ENCODE measurements at regions of chr17 and their contacts with region 1.

Region 1: GRCh38 chr17:40857535-40857934 is 9.5 kb downstream of the KRT12 start:
- DNase-seq: no peak
- ATAC-seq: peak; percentile 67

Region 2: GRCh38 chr17:40615295-40615988 is 242.1 kb before region 1 on chr17:
- intact Hi-C with region 1: no loop called
- DNase-seq: no peak
- ATAC-seq: peak; percentile 65

Region 3: DNA sequence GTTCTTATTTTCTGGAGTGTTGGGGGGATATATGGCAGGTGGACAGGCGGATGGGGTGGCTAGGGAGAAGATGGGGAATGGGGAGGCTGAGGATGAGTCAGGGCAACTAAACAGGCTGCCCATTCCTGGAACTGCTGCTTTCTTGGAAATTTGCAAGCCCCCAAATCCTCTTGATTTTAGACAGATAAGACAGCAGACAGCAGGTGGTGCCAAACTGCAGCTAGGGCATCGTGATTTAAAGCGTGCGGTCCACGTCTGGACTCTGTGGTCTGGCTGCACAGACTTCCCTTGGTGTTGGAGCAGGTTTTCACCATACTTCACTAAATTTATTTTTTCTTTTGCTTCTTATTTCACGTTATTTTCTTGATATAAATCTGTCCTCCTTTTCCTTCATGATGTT is 143.1 kb before region 1 on chr17:
- intact Hi-C with region 1: no loop called
- DNase-seq: no peak
- ATAC-seq: no peak

Region 4: DNA sequence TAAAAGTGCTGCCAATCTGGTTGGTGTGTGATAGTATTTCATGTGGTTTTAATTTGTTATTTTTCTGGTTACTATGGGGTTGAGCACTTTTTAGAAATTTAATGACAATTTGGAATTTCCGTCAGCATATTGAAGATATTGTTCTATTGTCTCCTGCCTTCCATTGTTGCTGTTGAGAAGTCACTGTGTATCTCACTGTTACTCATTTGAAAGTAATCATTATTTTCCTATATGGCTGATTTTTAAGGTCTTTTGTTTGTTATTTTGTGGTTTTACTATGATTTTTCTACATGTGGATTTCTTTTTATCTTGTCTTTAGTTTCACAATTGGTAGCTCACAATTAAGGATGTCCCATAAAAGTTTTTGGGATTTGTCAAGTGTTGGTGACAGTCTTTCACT is 93.8 kb before region 1 on chr17:
- intact Hi-C with region 1: no loop called
- DNase-seq: no peak
- ATAC-seq: no peak

Region 5: GRCh38 chr17:40791787-40792436 is 65.6 kb before region 1 on chr17:
- intact Hi-C with region 1: no loop called
- DNase-seq: no peak
- ATAC-seq: peak; percentile 73

Region 6: DNA sequence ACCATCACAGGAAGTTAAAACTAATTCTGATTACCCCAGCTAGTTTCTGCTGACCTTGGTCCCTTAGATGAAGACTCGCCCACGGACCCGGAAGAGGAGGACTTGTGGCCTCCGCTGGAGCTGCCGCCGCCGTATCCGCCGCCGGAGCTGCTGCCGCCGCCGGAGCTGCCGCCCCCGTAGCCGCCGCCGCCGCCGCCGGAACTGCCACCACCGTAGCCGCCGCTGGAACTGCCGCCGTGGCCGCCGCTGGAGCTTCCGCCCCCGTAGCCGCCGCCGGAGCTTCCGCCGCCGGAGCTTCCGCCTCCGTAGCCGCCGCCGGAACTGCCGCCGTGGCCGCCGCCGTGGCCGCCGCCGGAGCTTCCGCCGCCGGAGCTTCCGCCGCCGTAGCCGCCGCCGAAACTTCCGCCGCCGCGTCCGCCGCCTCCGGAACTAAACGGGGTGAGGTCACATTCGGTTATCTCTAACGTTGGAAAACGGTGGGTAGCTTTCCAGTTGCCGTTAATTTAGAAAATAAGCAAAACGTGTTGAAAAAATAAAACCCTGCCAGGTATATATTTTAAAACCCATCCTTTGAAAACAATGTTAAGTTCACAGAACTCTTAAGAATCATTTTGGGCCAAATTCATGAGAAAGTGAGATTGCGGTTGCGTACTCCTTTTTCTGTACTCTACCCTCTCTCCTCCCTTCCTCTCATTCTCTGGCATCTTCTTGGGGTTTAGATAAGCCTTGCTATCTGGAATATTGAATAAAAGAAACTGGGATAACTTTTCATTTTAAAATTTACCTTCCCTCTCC is 38.6 kb before region 1 on chr17:
- intact Hi-C with region 1: loop called (anchors 5 kb)
- DNase-seq: peak; percentile 91
- ATAC-seq: peak; percentile 89